PC-9 (cell line): ENCODE measurements at regions of chr17 and their contacts with region 1.

Region 1: DNA sequence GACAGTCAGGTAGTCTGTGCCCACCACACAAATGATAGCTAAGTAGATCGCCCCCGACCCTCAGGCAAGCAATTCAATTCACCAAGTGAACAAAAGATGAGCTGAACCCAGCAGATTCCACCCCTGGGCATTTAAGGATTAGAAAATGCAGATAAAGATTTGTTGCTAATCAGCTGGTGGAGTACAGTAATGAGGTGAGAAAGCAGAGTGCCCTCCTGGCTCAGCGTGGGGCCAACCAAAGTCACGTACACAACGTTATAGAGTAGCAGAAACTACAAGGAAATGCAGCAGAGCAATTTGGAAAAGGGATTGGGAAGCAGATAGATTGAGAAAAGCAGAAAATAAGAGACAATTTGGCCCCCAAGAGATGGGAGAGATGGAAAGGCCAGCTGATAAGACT is 91.2 kb downstream of the SOX9 start:
- DNase-seq: no peak
- H3K4me3 ChIP-seq: no peak overlapping the region
- H3K27ac ChIP-seq: no peak overlapping the region
- H3K4me1 ChIP-seq: no peaks in the 10 kb centered on the region
- H3K27me3 ChIP-seq: no peaks in the 10 kb centered on the region
- CTCF ChIP-seq: no peak

Region 2: DNA sequence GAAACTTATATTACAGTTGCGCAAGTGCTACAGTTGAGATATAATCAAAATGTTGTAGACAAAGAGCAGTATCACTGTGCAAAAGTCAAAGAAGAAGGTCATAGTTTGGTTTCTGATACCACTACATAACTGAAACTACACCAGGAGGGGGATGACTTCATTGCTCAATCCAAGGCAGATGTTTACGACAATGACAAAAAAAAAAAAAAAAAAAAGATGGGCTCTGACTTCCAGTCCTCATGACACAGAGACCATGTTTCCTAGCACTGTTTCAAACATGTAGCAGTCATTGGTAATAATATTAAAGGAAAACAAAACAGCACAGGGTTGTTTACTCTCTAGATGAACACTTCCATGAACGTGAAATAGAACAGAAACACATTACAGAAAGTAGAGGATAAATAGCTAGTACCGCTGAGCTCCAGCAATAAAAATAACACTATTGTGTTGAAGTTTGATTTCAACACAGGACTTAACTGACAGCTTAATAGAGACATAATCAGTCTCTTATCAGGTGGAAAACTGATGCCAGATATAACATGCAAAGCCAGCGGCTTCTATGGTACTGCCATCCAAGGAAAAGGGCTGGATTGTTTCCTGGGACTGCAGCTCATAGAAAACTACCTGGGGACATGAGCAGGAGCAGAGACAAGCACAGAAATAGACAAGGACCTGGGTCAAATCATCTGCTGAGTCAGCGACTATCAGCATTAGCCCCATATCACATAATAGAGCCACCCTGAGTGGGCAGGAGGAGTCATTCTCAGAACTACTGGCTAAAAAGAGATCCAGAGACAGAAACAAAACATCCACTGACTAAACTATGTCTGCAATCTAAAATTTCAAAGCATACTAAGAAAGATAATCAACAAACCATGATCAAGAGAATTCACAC is 554.8 kb before region 1 on chr17:
- CTCF ChIA-PET with region 1: no interaction called
- POLR2A ChIA-PET with region 1: no interaction called
- intact Hi-C with region 1: no loop called
- DNase-seq: no peak
- H3K4me3 ChIP-seq: no peak overlapping the region
- H3K27ac ChIP-seq: no peak overlapping the region
- H3K4me1 ChIP-seq: no peaks in the 10 kb centered on the region
- H3K27me3 ChIP-seq: no peaks in the 10 kb centered on the region
- CTCF ChIP-seq: no peak

Region 3: DNA sequence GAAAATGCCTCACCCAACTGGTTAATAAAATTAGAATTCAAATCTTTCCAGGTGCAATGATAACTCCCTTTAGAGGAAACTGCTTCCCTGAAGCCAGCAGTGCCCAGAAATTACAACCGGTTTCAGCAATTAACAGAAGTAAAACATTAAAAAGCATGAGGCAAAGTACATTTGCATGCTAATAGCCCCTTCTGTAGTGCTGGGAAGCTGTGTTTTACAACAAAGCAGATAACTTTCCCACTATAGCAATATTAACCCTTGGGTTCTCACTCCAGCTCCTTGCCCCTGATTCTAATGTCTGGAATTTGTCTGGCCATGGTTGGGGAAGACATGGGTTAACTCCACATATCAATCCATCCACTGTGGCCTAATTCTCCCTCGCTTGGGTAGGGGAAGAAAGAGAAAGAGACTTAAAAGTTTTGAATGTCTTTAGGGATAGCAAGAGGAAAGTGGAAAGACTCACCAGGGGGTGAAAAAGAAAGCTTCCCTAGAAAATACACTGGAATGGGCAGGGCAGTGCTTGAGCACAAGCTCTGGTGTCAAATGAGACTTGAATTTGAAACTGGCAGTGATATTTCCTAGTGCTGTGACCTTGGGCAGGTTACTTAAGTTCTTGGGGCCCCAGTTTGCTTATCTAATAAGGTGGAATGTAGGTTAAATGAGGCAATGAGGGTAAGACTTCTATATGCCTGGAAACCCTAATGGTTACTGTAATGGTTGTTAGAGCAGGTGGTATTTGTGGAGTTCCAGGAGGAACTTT is 10.8 kb after region 1 on chr17:
- CTCF ChIA-PET with region 1: no interaction called
- POLR2A ChIA-PET with region 1: no interaction called
- intact Hi-C with region 1: loop called (anchors 1 kb)
- DNase-seq: no peak
- H3K4me3 ChIP-seq: no peak overlapping the region
- H3K27ac ChIP-seq: no peak overlapping the region
- H3K4me1 ChIP-seq: no peaks in the 10 kb centered on the region
- H3K27me3 ChIP-seq: no peaks in the 10 kb centered on the region
- CTCF ChIP-seq: no peak